ENCODE measurements at regions of chr4 and their contacts with region 1.

Region 1: GRCh38 chr4:67988991-67989390 is 25.7 kb upstream of the TMPRSS11A start:
- DNase-seq: no peak
- H3K4me3 ChIP-seq: no peak overlapping the region
- H3K4me3 Mint-ChIP-seq: no peak overlapping the region
- H3K27ac Mint-ChIP-seq: no peak overlapping the region
- H3K4me1 ChIP-seq: no peaks in the 10 kb centered on the region
- H3K4me1 Mint-ChIP-seq: no peaks in the 10 kb centered on the region
- H3K27me3 ChIP-seq: no peaks in the 10 kb centered on the region
- H3K27me3 Mint-ChIP-seq: no peaks in the 10 kb centered on the region
- CTCF ChIP-seq: no peak

Region 2: DNA sequence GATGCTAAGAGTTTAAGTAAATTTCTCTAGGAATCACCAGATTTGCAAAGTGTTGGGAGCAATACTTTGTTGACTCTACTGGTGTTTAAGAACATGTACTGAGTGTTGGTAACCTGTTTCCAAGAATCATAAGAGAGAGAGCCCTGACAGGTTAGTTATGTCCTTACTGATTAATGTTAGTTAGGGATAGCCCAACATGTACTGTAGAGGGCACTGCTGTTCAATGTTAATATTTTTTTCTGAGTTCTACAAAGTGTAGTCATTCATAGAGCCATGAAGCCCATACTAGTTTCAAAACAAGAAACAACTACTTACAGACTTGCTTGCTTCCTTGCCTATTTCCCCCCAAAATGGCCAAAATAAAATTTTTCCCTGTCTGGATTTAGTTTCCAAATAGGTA is 117.1 kb before region 1 on chr4:
- CTCF ChIA-PET with region 1: no interaction called
- POLR2A ChIA-PET with region 1: no interaction called
- intact Hi-C with region 1: loop called (anchors 5 kb)
- DNase-seq: peak in 1 of 2 experiments; percentile 32
- H3K4me3 ChIP-seq: no peak overlapping the region
- H3K4me3 Mint-ChIP-seq: no peak overlapping the region
- H3K27ac Mint-ChIP-seq: no peak overlapping the region
- H3K4me1 ChIP-seq: no peaks in the 10 kb centered on the region
- H3K4me1 Mint-ChIP-seq: no peaks in the 10 kb centered on the region
- H3K27me3 ChIP-seq: no peaks in the 10 kb centered on the region
- H3K27me3 Mint-ChIP-seq: peaks cover 3% of the 10 kb centered on the region
- CTCF ChIP-seq: peak; percentile 24 to 32

Region 3: GRCh38 chr4:67918428-67918827 is 70.6 kb before region 1 on chr4:
- CTCF ChIA-PET with region 1: no interaction called
- POLR2A ChIA-PET with region 1: no interaction called
- intact Hi-C with region 1: loop called (anchors 5 kb)
- DNase-seq: no peak
- H3K4me3 ChIP-seq: no peak overlapping the region
- H3K4me3 Mint-ChIP-seq: no peak overlapping the region
- H3K27ac Mint-ChIP-seq: no peak overlapping the region
- H3K4me1 ChIP-seq: no peaks in the 10 kb centered on the region
- H3K4me1 Mint-ChIP-seq: no peaks in the 10 kb centered on the region
- H3K27me3 ChIP-seq: no peaks in the 10 kb centered on the region
- H3K27me3 Mint-ChIP-seq: no peaks in the 10 kb centered on the region
- CTCF ChIP-seq: peak; percentile 33 to 49

Region 4: DNA sequence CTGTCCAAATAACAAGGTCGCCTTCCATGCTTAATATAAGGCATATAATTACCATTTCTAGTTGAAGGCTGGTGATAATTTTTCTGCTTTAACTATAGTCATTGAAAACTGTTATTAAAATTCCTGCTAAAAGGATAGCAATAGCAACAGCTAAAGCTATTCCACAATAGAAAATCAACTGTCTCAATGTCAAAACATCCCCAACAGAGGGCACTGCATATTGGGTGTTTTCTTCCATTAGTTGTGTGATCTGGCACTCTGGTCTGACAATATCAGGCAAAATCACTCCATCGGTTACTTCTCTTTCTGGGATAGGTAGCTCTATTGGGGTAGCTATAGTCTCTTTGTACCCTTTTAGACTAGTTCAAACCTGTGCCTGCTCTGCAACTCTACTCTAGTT is 87.2 kb after region 1 on chr4:
- CTCF ChIA-PET with region 1: no interaction called
- POLR2A ChIA-PET with region 1: no interaction called
- intact Hi-C with region 1: loop called (anchors 5 kb)
- DNase-seq: peak in 1 of 2 experiments; percentile 5
- H3K4me3 ChIP-seq: no peak overlapping the region
- H3K4me3 Mint-ChIP-seq: no peak overlapping the region
- H3K27ac Mint-ChIP-seq: no peak overlapping the region
- H3K4me1 ChIP-seq: no peaks in the 10 kb centered on the region
- H3K4me1 Mint-ChIP-seq: no peaks in the 10 kb centered on the region
- H3K27me3 ChIP-seq: no peaks in the 10 kb centered on the region
- H3K27me3 Mint-ChIP-seq: peaks cover 3% of the 10 kb centered on the region
- CTCF ChIP-seq: peak in 1 of 2 experiments; percentile 18